ENCODE measurements at regions of chr20 and their contacts with region 1.

Region 1: GRCh38 chr20:324177-325044 is 941 bp upstream of the SOX12 start:
- DNase-seq: peak; percentile 86 to 98
- H3K4me3 ChIP-seq: peak overlapping the region; percentile 83
- H3K27ac ChIP-seq: peak overlapping the region; percentile 85
- H3K4me1 ChIP-seq: peaks cover 20% of the 10 kb centered on the region
- H3K27me3 ChIP-seq: no peaks in the 10 kb centered on the region
- CTCF ChIP-seq: no peak; the same call in 1 of the 2 replicates

Region 2: DNA sequence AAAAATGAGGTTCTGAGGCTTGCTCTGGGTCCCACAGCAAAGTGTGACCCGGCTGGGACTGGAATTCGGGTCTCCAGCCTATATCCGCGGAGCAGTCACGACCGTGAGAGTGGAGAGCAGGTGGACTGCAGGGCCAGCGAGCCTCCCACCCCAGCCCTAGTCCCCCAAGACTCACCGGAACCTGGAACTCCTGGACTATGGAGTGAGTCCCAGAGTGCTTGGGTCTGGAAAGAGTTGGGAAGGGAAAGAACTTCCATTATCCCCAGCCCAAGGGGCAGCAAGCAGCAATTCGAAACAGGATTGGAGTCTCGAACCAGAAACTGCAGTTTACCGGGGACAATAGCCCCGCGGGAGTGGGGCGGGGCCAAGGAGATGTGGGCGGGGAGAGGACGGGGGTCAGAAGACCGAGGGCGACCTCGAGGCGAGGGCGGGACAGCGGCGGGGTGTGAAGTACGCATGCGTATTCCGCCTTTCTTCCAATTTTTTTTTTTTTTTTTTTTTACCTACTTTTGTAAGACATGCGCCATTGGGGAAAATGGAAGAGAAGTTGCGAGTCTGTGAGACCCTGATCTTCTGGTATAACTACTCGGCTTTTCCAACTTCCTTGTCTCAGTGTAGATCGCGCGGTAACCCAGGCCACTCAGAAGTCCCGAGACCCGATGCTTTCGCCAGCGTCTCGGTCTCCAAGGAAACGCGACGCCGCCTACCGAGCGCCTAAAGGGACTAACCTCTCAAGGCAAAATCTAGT is 34.2 kb before region 1 on chr20 and contains the start of gene C20orf96:
- CTCF ChIA-PET with region 1: no interaction called
- POLR2A ChIA-PET with region 1: interaction called, 5 read pairs
- intact Hi-C with region 1: loop called (anchors 1 kb)
- DNase-seq: peak; percentile 90 to 93
- H3K4me3 ChIP-seq: peak within 1 kb of the TSS; percentile 96
- H3K27ac ChIP-seq: peak within 1 kb of the TSS; percentile 53
- H3K4me1 ChIP-seq: peaks cover 7% of the 10 kb centered on the region
- H3K27me3 ChIP-seq: no peaks in the 10 kb centered on the region
- CTCF ChIP-seq: peak; percentile 58; the same call in 1 of the 2 replicates
- total RNA-seq, gene C20orf96: 20.7 and 25.7 TPM in 2 replicates

Region 3: DNA sequence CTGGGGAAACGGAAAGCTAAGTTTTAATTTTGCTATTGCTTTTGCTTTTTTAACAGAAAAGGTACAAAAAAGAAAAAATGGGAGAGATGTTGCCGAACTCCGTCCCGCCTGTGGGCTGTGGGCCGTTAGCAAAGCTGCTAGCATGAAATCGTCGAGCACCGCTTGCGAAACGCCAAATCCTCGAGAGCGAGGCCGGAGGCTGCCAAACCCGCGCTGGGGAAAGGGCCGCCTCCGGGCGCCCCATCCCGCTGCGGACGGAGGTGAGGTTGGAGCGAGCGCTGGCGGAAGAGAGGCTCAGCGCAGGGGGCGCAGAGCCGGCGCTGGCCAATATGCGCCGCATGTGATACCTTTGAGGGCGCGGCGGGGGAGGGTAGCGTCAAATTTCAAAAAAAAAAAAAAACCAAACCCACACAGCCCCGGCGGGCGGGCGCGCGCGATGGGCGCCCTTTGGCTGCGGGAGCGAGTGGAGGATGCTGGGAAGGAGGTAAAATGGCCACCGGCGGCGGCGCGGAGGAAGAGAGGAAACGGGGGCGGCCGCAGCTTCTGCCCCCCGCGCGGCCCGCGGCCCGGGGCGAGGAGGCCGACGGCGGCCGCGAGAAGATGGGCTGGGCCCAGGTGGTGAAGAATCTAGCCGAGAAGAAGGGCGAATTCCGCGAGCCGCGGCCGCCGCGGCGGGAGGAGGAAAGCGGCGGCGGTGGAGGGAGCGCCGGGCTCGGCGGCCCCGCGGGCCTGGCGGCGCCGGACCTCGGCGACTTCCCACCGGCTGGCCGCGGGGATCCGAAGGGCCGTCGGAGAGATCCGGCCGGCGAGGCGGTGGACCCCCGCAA is 27.1 kb before region 1 on chr20 and contains the start of gene ZCCHC3:
- CTCF ChIA-PET with region 1: interaction called, 3 read pairs
- POLR2A ChIA-PET with region 1: interaction called, 12 read pairs
- intact Hi-C with region 1: loop called (anchors 1 kb)
- DNase-seq: peak; percentile 86 to 91
- H3K4me3 ChIP-seq: peak within 1 kb of the TSS; percentile 82
- H3K27ac ChIP-seq: peak within 1 kb of the TSS; percentile 81
- H3K4me1 ChIP-seq: peaks cover 27% of the 10 kb centered on the region
- H3K27me3 ChIP-seq: no peaks in the 10 kb centered on the region
- CTCF ChIP-seq: no peak
- total RNA-seq, gene ZCCHC3: 16.0 and 17.7 TPM in 2 replicates

Region 4: GRCh38 chr20:653110-653589 is 328.7 kb after region 1 on chr20 and contains the start of gene SRXN1:
- CTCF ChIA-PET with region 1: no interaction called
- POLR2A ChIA-PET with region 1: no interaction called
- intact Hi-C with region 1: loop called (anchors 10 kb)
- DNase-seq: peak; percentile 76 to 94
- H3K4me3 ChIP-seq: peak within 1 kb of the TSS; percentile 94
- H3K27ac ChIP-seq: peak within 1 kb of the TSS; percentile 86
- H3K4me1 ChIP-seq: peaks cover 25% of the 10 kb centered on the region
- H3K27me3 ChIP-seq: no peaks in the 10 kb centered on the region
- CTCF ChIP-seq: peak; percentile 46; the same call in 1 of the 2 replicates
- total RNA-seq, gene SRXN1: 167 and 204 TPM in 2 replicates